ENCODE measurements at regions of chr16 and their contacts with region 1.

Region 1: DNA sequence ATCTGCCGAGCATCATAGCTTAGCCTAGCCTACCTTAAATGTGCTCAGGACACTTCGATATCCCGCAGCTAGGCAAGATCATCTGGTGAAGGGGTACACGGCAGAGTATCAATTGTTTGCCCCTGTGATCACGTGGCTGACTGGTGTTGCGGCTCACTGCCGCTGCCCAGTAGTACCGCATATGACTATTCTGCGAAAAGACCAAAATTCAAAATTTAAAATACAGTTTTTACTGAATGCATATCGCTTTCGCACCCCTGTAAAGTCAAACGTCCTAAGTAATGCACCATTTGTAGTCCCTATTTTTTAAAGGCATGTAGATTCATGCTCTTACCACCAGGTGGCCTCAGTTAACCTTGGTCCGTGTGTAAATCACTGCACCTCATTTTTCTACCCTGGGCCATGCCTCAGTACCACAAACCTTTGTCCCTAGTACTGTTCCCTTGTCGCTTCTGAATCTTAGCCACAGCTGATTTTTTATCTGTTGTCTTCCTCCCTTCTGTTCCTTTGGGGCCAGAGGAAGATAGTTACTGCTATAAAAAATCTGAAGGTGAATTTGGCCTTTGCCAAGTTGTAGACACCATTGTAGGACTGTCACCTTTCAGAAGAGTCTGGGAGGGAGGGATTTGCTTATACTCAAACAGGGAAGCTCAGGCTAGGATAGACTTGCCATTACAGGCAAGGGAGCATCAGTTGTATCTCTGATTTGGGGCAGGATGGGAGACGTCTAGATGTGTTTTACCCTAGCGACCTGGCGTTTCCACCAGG is 34.4 kb downstream of the WWP2 start:
- DNase-seq: peak; percentile 50 to 63
- H3K4me3 ChIP-seq: no peak overlapping the region
- H3K4me3 Mint-ChIP-seq: no peak overlapping the region
- H3K27ac Mint-ChIP-seq: no peak overlapping the region
- H3K4me1 ChIP-seq: no peaks in the 10 kb centered on the region
- H3K4me1 Mint-ChIP-seq: no peaks in the 10 kb centered on the region
- H3K27me3 ChIP-seq: no peaks in the 10 kb centered on the region
- H3K27me3 Mint-ChIP-seq: no peaks in the 10 kb centered on the region
- CTCF ChIP-seq: peak; percentile 86 to 93

Region 2: GRCh38 chr16:69831212-69832123 is 34.9 kb after region 1 on chr16:
- CTCF ChIA-PET with region 1: no interaction called
- POLR2A ChIA-PET with region 1: no interaction called
- intact Hi-C with region 1: loop called (anchors 2 kb)
- DNase-seq: no peak
- H3K4me3 ChIP-seq: no peak overlapping the region
- H3K4me3 Mint-ChIP-seq: peak overlapping the region; percentile 31
- H3K27ac Mint-ChIP-seq: peak overlapping the region; percentile 87
- H3K4me1 ChIP-seq: peaks cover 35% of the 10 kb centered on the region
- H3K4me1 Mint-ChIP-seq: peaks cover 31% of the 10 kb centered on the region
- H3K27me3 ChIP-seq: no peaks in the 10 kb centered on the region
- H3K27me3 Mint-ChIP-seq: no peaks in the 10 kb centered on the region
- CTCF ChIP-seq: no peak

Region 3: DNA sequence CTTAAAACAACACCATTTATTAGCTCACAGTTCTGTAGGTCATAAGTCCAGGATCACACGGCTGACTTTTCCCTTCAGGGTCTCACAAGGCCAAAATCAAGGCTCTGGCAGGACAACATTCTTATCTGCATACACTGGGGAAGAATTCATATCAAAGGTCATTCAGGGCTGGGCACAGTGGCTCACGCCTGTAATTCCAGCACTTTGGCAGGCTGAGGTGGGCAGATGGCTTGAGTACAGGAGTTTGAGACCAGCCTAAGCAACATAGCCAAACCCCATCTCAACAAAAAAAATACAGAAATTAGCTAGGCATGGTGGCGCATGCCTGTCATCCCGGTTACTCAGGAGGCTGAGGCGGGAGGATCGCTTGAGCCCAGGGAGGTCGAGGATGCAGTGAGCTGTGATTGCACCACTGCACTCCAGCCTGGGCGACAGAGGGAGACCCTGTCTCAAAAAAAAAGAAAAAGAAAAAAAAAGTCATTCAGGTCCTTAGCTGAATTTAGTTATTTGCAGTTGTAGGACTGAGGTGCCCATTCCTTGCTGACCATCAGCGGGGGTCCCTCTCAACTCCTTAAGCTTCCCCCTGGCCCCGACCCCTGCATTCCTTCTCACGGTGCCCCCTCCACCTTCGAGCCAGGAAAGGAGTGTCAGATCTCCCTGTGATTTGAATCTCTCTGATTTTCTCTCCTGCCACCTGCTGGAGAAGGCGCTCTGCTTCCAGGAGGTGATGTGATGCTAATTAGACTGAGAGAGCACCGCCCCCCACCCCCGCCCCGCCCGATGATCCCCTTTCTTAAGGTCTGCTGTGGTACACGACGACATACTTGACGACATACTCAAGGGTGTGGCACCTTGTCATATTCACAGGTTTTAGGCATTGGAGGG is 62.8 kb after region 1 on chr16:
- CTCF ChIA-PET with region 1: no interaction called
- POLR2A ChIA-PET with region 1: no interaction called
- intact Hi-C with region 1: loop called (anchors 1 kb)
- DNase-seq: peak; percentile 66 to 70
- H3K4me3 ChIP-seq: no peak overlapping the region
- H3K4me3 Mint-ChIP-seq: peak overlapping the region; percentile 65
- H3K27ac Mint-ChIP-seq: peak overlapping the region; percentile 86
- H3K4me1 ChIP-seq: peaks cover 12% of the 10 kb centered on the region
- H3K4me1 Mint-ChIP-seq: peaks cover 18% of the 10 kb centered on the region
- H3K27me3 ChIP-seq: no peaks in the 10 kb centered on the region
- H3K27me3 Mint-ChIP-seq: no peaks in the 10 kb centered on the region
- CTCF ChIP-seq: peak; percentile 52 to 59

Region 4: GRCh38 chr16:69930117-69930776 is 133.7 kb after region 1 on chr16:
- CTCF ChIA-PET with region 1: interaction called, 22 read pairs
- POLR2A ChIA-PET with region 1: no interaction called
- intact Hi-C with region 1: loop called (anchors 1 kb)
- DNase-seq: peak; percentile 68 to 83
- H3K4me3 ChIP-seq: no peak overlapping the region
- H3K4me3 Mint-ChIP-seq: no peak overlapping the region
- H3K27ac Mint-ChIP-seq: no peak overlapping the region
- H3K4me1 ChIP-seq: no peaks in the 10 kb centered on the region
- H3K4me1 Mint-ChIP-seq: no peaks in the 10 kb centered on the region
- H3K27me3 ChIP-seq: no peaks in the 10 kb centered on the region
- H3K27me3 Mint-ChIP-seq: no peaks in the 10 kb centered on the region
- CTCF ChIP-seq: peak; percentile 78 to 89

Region 5: DNA sequence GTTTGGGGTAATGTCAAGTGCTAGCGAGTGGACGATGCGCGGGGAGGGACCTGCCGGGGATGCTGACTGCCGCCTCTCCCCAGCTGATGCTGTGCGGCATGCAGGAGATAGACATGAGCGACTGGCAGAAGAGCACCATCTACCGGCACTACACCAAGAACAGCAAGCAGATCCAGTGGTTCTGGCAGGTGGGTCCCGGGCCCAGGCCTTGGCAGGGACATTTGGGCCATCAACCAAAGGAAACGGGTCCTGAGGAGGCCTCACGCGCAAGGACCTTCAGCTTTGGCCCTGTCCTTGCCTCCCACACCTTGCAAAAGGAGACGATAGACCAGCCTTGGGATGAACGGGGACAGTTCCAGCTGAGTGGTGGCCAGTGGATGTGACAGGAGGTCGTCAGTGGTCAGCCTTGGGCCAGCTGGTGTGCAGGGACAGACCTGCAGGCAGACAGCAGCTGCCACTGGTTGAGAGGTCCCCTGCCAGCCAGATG is 141.0 kb after region 1 on chr16:
- CTCF ChIA-PET with region 1: interaction called, 4 read pairs
- POLR2A ChIA-PET with region 1: no interaction called
- intact Hi-C with region 1: loop called (anchors 1 kb)
- DNase-seq: peak in 1 of 2 experiments; percentile 48
- H3K4me3 ChIP-seq: no peak overlapping the region
- H3K4me3 Mint-ChIP-seq: no peak overlapping the region
- H3K27ac Mint-ChIP-seq: no peak overlapping the region
- H3K4me1 ChIP-seq: no peaks in the 10 kb centered on the region
- H3K4me1 Mint-ChIP-seq: no peaks in the 10 kb centered on the region
- H3K27me3 ChIP-seq: no peaks in the 10 kb centered on the region
- H3K27me3 Mint-ChIP-seq: no peaks in the 10 kb centered on the region
- CTCF ChIP-seq: peak; percentile 41 to 71